ENCODE measurements at regions of chr16 and their contacts with region 1.

Region 1: GRCh38 chr16:73916829-73917594 is 379.6 kb upstream of the PSMD7 start:
- DNase-seq: no peak
- ATAC-seq: peak; percentile 97

Region 2: DNA sequence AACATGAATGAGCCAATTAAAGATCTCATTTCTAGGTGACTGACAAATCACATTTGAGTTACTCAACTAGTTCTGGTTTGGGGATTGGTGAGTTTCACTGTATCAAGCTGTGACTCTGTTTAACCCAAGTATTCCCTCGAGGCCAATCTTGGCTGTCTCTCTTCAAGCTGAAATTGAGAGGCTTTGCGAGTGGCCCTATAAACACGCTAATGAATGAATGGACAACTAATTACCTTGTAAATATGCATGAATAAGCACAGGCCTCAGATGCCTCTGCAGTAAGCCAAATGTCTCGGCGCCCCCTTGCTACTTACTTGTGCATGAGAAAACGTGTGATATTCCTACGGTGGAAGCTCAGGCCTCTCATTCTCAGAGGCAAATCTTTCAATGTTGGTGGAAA is 70.7 kb before region 1 on chr16:
- intact Hi-C with region 1: no loop called
- DNase-seq: no peak
- ATAC-seq: no peak

Region 3: DNA sequence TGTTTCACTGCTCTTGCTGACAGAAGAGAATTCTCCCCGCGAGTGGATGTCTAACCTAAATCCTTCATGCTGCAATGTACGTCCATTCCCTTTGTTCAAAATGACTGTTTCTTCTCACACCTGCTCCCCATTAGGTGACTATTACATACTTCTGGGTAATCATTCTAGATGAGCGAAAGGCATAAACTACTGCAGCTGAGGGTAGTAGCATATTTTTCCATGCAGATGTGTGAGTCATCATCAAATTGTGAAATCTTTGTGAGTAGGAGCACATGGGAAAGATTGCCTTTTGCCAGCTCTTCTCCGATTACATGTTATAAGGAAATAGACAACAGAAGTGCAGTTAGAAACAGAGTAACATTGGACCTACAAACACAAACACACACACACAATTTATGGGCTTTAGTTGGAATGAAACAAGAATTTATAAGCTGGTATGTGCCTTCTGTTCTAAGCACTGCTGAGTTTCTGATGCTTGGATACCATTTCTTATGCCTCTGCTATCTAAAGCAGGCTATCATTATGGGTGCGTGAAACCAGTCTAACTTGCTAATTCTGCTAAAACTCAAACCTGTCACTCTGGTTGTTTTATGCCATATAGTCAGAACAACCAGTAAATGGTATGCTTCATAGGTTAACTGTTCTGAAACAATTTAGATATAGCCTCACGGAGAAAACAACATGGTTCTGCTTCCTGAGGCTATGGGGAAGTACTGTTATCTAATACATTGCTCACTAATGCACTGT is 32.7 kb after region 1 on chr16:
- intact Hi-C with region 1: loop called (anchors 2 kb)
- DNase-seq: no peak
- ATAC-seq: peak; percentile 76

Measured in Right ventricle myocardium inferior (tissue), 1 donor.